ENCODE measurements at regions of chr15 and their contacts with region 1.

Region 1: GRCh38 chr15:64443747-64444621 is 16.4 kb upstream of the ZNF609 start:
- DNase-seq: no peak
- H3K4me3 Mint-ChIP-seq: peak overlapping the region; percentile 36
- H3K27ac Mint-ChIP-seq: peak overlapping the region; percentile 91
- H3K4me1 Mint-ChIP-seq: peaks cover 48% of the 10 kb centered on the region
- H3K27me3 Mint-ChIP-seq: no peaks in the 10 kb centered on the region

Region 2: GRCh38 chr15:64430000-64430735 is 13.8 kb before region 1 on chr15:
- CTCF ChIA-PET with region 1: interaction called, 3 read pairs
- POLR2A ChIA-PET with region 1: interaction called, 3 read pairs
- intact Hi-C with region 1: loop called (anchors 1 kb)
- DNase-seq: peak; percentile 45
- H3K4me3 Mint-ChIP-seq: no peak overlapping the region
- H3K27ac Mint-ChIP-seq: peak overlapping the region; percentile 75
- H3K4me1 Mint-ChIP-seq: peaks cover 35% of the 10 kb centered on the region
- H3K27me3 Mint-ChIP-seq: no peaks in the 10 kb centered on the region

Region 3: GRCh38 chr15:64474846-64475245 is 30.9 kb after region 1 on chr15:
- CTCF ChIA-PET with region 1: no interaction called
- POLR2A ChIA-PET with region 1: no interaction called
- intact Hi-C with region 1: no loop called
- DNase-seq: no peak
- H3K4me3 Mint-ChIP-seq: no peak overlapping the region
- H3K27ac Mint-ChIP-seq: no peak overlapping the region
- H3K4me1 Mint-ChIP-seq: peaks cover 19% of the 10 kb centered on the region
- H3K27me3 Mint-ChIP-seq: no peaks in the 10 kb centered on the region

Region 4: GRCh38 chr15:64717735-64718495 is 273.9 kb after region 1 on chr15:
- CTCF ChIA-PET with region 1: no interaction called
- POLR2A ChIA-PET with region 1: no interaction called
- intact Hi-C with region 1: no loop called
- DNase-seq: no peak
- H3K4me3 Mint-ChIP-seq: no peak overlapping the region
- H3K27ac Mint-ChIP-seq: no peak overlapping the region
- H3K4me1 Mint-ChIP-seq: no peaks in the 10 kb centered on the region
- H3K27me3 Mint-ChIP-seq: no peaks in the 10 kb centered on the region

Region 5: DNA sequence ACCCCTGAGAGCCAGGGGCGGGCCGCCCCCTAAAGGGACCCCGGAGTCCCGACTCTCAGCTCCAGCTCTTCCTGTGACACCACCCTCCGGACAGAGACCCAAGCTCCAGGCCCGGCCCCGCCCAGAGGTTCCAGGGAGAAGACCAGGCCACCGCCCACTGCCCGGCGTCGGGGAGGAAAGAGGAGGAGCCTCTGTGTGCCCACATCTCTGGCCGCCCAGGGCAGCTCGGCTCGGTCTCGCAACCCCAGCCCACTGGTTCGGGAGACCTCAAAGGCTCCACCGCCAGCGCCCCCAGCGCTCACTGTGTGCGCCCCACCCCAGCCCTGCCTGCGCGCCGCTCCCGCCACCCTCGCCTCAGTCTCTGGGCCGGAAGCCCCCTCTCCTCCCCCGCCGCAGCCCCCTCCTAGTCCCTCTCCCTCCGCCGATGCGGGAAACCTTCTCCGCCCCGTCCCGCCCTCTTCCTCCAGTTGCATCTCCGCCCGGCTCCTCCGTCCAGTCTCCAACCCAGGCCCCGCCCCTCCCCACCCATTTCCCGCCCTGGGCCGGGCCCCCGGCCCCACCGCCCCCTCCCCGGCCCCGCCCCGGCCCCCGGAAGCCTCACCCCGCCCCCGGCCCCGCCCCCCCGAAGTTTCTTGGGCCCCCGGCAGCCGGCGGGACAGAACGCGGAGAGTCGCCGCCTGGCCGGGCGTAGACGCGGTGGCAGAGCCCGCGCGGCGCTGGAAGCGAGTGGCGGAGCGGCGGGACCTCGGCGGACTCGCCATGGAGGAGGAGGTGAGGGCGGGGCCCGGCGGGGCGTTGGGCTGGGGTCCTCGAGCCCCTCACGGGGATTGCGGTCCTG is 397.5 kb after region 1 on chr15 and contains the start of gene PLEKHO2:
- CTCF ChIA-PET with region 1: no interaction called
- POLR2A ChIA-PET with region 1: no interaction called
- intact Hi-C with region 1: no loop called
- DNase-seq: peak; percentile 95
- H3K4me3 Mint-ChIP-seq: peak within 1 kb of the TSS; percentile 95
- H3K27ac Mint-ChIP-seq: peak within 1 kb of the TSS; percentile 84
- H3K4me1 Mint-ChIP-seq: peaks cover 60% of the 10 kb centered on the region
- H3K27me3 Mint-ChIP-seq: no peaks in the 10 kb centered on the region
- total RNA-seq, gene PLEKHO2: 15.3 to 15.6 TPM